ENCODE measurements at regions of chr7 and their contacts with region 1.

Region 1: GRCh38 chr7:121366852-121367431 is 29.2 kb downstream of the FAM3C start:
- DNase-seq: no peak
- ATAC-seq: peak; percentile 49
- H3K4me3 Mint-ChIP-seq: no peak overlapping the region
- H3K27ac Mint-ChIP-seq: peak overlapping the region; percentile 35
- H3K4me1 Mint-ChIP-seq: peaks cover 62% of the 10 kb centered on the region
- H3K27me3 Mint-ChIP-seq: no peaks in the 10 kb centered on the region
- CTCF ChIP-seq: peak; percentile 21

Region 2: DNA sequence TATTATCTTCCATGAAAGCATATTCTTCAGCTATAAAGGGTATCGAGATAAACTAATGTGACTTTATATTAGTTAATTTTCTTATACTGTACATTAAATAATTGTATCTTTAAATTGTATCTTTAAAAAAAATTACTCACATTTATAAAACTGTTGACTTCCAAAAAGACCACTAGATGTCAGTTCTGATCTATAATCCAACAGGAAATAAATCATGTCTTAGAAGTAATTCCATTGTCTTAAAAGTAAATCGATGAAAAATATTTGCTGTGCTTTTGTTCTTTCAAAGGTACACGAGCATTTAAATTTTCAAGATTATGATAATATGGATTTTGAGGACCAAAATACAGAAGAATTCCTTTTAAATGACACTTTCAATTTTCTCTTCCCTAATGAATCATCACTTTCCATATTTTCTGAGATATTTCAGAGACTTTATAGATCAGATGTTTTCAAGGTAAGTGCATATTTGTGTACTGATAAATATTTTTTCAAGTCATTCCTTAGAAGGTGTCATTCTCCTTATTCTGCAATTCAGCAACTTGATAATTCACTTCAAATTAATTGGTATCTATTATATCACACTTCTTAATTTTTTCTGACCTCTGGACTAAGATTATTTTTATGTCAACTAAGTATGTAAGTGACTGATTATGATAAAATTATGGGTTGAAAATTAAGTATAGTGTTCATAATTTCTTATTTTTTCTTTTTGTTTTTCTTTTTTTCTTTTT is 240.0 kb before region 1 on chr7:
- CTCF ChIA-PET with region 1: interaction called, 5 read pairs
- POLR2A ChIA-PET with region 1: no interaction called
- intact Hi-C with region 1: loop called (anchors 1 kb)
- DNase-seq: no peak
- ATAC-seq: no peak
- H3K4me3 Mint-ChIP-seq: no peak overlapping the region
- H3K27ac Mint-ChIP-seq: no peak overlapping the region
- H3K4me1 Mint-ChIP-seq: peaks cover 18% of the 10 kb centered on the region
- H3K27me3 Mint-ChIP-seq: no peaks in the 10 kb centered on the region
- CTCF ChIP-seq: no peak

Region 3: GRCh38 chr7:121153995-121154394 is 212.9 kb before region 1 on chr7:
- CTCF ChIA-PET with region 1: no interaction called
- POLR2A ChIA-PET with region 1: no interaction called
- intact Hi-C with region 1: no loop called
- DNase-seq: no peak
- ATAC-seq: no peak
- H3K4me3 Mint-ChIP-seq: no peak overlapping the region
- H3K27ac Mint-ChIP-seq: no peak overlapping the region
- H3K4me1 Mint-ChIP-seq: peaks cover 13% of the 10 kb centered on the region
- H3K27me3 Mint-ChIP-seq: no peaks in the 10 kb centered on the region
- CTCF ChIP-seq: no peak

Region 4: GRCh38 chr7:121172484-121172883 is 194.5 kb before region 1 on chr7:
- CTCF ChIA-PET with region 1: no interaction called
- POLR2A ChIA-PET with region 1: no interaction called
- intact Hi-C with region 1: no loop called
- DNase-seq: no peak
- ATAC-seq: no peak
- H3K4me3 Mint-ChIP-seq: no peak overlapping the region
- H3K27ac Mint-ChIP-seq: no peak overlapping the region
- H3K4me1 Mint-ChIP-seq: peaks cover 31% of the 10 kb centered on the region
- H3K27me3 Mint-ChIP-seq: no peaks in the 10 kb centered on the region
- CTCF ChIP-seq: no peak

Region 5: DNA sequence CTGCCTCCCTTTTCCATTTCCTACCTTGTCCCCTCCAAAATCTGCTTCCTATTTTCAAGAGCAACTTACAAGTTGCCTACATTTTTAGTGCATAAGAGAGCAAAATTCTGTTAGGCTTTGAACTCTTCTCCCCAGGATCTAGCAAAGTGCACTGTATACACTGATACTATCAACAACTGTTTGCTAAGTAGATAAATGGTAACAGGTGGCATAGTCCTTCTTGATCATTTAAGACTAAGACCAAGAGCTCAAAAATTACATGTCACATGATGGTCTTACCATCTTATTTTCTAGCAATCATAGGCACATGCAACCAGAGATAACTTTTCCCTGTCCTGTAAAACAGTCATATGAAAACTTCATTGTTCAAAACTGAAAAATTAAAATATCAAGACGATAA is 13.0 kb after region 1 on chr7:
- CTCF ChIA-PET with region 1: interaction called, 37 read pairs
- POLR2A ChIA-PET with region 1: interaction called, 7 read pairs
- intact Hi-C with region 1: loop called (anchors 1 kb)
- DNase-seq: no peak
- ATAC-seq: no peak
- H3K4me3 Mint-ChIP-seq: peak overlapping the region; percentile 24
- H3K27ac Mint-ChIP-seq: peak overlapping the region; percentile 71
- H3K4me1 Mint-ChIP-seq: peaks cover 94% of the 10 kb centered on the region
- H3K27me3 Mint-ChIP-seq: no peaks in the 10 kb centered on the region
- CTCF ChIP-seq: no peak

Region 6: GRCh38 chr7:121385800-121386179 is 18.8 kb after region 1 on chr7:
- CTCF ChIA-PET with region 1: interaction called, 37 read pairs
- POLR2A ChIA-PET with region 1: interaction called, 7 read pairs
- intact Hi-C with region 1: loop called (anchors 1 kb)
- DNase-seq: no peak
- ATAC-seq: peak; percentile 86
- H3K4me3 Mint-ChIP-seq: peak overlapping the region; percentile 54
- H3K27ac Mint-ChIP-seq: peak overlapping the region; percentile 83
- H3K4me1 Mint-ChIP-seq: peaks cover 96% of the 10 kb centered on the region
- H3K27me3 Mint-ChIP-seq: no peaks in the 10 kb centered on the region
- CTCF ChIP-seq: no peak

Region 7: GRCh38 chr7:121437456-121438127 is 70.7 kb after region 1 on chr7:
- CTCF ChIA-PET with region 1: interaction called, 14 read pairs
- POLR2A ChIA-PET with region 1: interaction called, 4 read pairs
- intact Hi-C with region 1: loop called (anchors 1 kb)
- DNase-seq: no peak
- ATAC-seq: peak; percentile 9
- H3K4me3 Mint-ChIP-seq: peak overlapping the region; percentile 82
- H3K27ac Mint-ChIP-seq: peak overlapping the region; percentile 89
- H3K4me1 Mint-ChIP-seq: peaks cover 47% of the 10 kb centered on the region
- H3K27me3 Mint-ChIP-seq: no peaks in the 10 kb centered on the region
- CTCF ChIP-seq: no peak

Region 8: DNA sequence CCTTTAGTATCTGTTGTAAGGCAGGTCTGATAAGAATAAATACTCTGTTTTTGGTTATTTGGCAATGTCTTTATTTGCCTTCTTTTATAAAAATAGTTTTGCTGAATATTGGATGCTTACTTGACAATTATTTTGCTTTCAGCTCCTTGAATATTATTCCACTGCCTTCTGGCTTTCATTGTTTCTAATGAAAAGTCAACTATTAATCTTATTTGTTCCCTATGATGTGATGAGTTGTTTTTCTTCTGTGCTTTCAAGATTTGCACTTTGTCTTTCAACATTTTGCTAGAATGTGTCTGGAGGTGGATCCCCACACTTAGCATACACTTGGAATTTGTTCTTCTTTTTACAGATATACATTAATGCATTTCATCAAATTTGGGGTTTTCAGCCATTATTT is 302.2 kb after region 1 on chr7:
- CTCF ChIA-PET with region 1: no interaction called
- POLR2A ChIA-PET with region 1: no interaction called
- intact Hi-C with region 1: no loop called
- DNase-seq: no peak
- ATAC-seq: no peak
- H3K4me3 Mint-ChIP-seq: no peak overlapping the region
- H3K27ac Mint-ChIP-seq: no peak overlapping the region
- H3K4me1 Mint-ChIP-seq: no peaks in the 10 kb centered on the region
- H3K27me3 Mint-ChIP-seq: no peaks in the 10 kb centered on the region
- CTCF ChIP-seq: no peak

Region 9: DNA sequence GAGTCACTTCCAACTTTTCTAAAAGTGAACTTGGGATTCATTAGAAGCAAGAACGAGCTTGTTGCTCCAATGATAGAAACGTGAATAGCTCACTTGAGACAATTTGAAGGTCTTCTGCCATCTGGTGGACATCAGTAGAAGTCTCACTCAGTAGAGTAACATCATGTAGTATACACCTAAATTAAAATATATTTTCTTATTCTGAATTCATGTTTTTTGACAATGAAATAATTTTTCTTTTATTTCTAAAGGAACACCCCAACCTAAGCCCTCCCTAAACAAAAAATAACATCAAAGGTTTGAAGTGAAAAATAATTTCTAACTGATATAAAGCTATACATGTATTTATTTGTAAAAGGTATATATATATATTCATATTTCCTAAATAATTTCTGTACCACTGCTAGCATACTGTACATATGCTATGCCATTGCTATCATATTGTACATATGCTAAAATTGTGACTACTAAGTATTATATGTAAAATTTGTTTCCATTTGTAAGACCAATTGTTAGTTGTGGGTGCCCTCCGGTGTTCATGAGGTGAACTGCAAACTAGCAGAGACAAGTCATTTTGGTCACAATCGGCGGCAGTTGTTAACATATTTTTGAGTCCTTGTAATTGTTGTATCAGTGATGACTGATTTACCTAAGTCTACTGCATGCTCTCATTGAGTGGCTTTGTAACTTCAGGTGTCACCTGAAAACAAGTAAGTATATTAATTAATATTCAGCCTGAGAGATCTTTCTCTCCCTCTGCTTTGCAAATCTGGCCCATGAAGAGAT is 627.9 kb after region 1 on chr7:
- CTCF ChIA-PET with region 1: interaction called, 16 read pairs
- POLR2A ChIA-PET with region 1: no interaction called
- intact Hi-C with region 1: loop called (anchors 1 kb)
- DNase-seq: no peak
- ATAC-seq: peak; percentile 86
- H3K4me3 Mint-ChIP-seq: no peak overlapping the region
- H3K27ac Mint-ChIP-seq: no peak overlapping the region
- H3K4me1 Mint-ChIP-seq: no peaks in the 10 kb centered on the region
- H3K27me3 Mint-ChIP-seq: peaks cover 2% of the 10 kb centered on the region
- CTCF ChIP-seq: peak; percentile 83